Ovary (tissue), 10 donors: ENCODE measurements at regions of chr22 and their contacts with region 1.

Region 1: GRCh38 chr22:38317122-38317994 is at the start of gene CSNK1E:
- DNase-seq: peak; percentile 82 to 89 (median 87)
- H3K4me3 ChIP-seq: peak within 1 kb of the TSS; percentile 59
- H3K27ac ChIP-seq: peak within 1 kb of the TSS; percentile 95 to 97
- H3K4me1 ChIP-seq: peaks cover 10% of the 10 kb centered on the region
- H3K27me3 ChIP-seq: no peaks in the 10 kb centered on the region
- CTCF ChIP-seq: no peak
- EP300 ChIP-seq: no peak
- POLR2A ChIP-seq: peak; percentile 25
- total RNA-seq, gene CSNK1E: 73.2 to 161 (median 105) TPM

Region 2: DNA sequence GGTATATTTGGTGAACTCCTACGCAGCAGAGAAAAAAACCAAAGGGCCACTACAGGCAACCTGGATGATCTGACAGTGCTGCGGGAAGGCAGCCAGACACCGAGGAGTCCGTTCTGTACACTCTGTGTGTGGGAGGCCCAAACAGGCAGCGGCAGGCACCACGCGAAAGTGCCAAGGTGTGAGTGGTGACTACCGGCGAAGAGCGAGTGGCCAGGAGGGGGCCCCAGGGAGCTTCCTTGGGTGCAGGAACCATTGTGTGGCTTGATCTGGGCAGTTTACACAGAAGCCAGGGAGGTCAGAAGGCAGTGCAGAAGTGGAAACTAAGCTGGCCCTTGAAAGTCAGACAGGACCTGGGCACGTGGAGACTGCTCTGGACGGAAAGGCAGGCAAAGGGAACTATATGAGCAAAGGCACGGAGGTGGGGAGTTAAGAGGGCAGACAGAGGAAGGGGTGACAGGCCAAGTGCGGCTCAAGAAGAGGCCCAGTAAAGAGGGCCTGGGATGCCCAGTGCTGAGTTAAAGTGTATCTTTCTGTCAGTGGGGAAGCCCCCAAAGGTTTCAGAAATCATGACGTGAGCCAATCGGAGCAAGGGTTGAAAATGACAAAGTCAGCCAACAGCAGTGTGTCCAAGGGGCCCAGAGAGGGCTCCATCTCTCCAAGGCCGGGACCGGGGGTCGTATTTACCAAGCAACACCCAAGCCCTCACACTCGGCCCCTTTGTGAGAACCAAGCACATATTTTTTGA is 55.1 kb before region 1 on chr22:
- intact Hi-C with region 1: loop called in 1 of 4 experiments (anchors 5 kb)
- DNase-seq: peak in 4 of 5 donors; percentile 46 to 74 (median 56)
- H3K4me3 ChIP-seq: no peak overlapping the region
- H3K27ac ChIP-seq: peak overlapping the region; percentile 32 to 46
- H3K4me1 ChIP-seq: peaks cover 27% of the 10 kb centered on the region
- H3K27me3 ChIP-seq: no peaks in the 10 kb centered on the region
- CTCF ChIP-seq: peak in 1 of 3 donors; percentile 35
- EP300 ChIP-seq: no peak
- POLR2A ChIP-seq: no peak

Region 3: GRCh38 chr22:38272373-38273134 is 44.8 kb before region 1 on chr22 and contains the start of gene TMEM184B:
- intact Hi-C with region 1: loop called in 1 of 4 experiments (anchors 5 kb)
- DNase-seq: peak; percentile 76 to 88 (median 84)
- H3K4me3 ChIP-seq: peak within 1 kb of the TSS; percentile 86
- H3K27ac ChIP-seq: peak within 1 kb of the TSS; percentile 80 to 82
- H3K4me1 ChIP-seq: peaks cover 10% of the 10 kb centered on the region
- H3K27me3 ChIP-seq: no peaks in the 10 kb centered on the region
- CTCF ChIP-seq: peak in 2 of 3 donors; percentile 15 to 18
- EP300 ChIP-seq: no peak
- POLR2A ChIP-seq: peak; percentile 95
- total RNA-seq, gene TMEM184B: 24.9 to 48.3 (median 38.6) TPM

Region 4: DNA sequence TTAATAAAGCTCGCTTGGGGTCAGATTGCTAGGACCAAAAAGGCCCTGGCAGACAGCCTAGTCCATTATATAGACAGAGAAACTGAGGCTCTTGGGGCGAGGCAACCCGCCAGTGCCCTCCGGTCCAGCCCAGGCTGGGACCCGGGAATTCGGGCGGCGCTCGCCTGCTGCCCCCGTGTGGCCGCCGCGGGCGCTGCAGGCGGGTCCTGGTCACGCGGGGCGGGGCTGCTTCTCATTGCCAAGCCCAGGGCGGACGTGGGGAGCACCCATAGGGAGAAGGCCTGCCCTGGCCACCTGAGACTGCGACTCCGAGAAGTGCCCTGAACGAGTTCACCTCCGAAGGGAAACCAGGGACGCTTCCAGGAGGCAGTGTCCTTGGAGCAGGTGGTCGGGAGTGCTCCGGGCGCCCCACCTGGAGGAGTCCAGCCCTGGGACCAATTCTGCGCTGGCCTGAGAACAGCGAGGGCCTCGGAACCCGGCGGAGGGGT is 35.8 kb after region 1 on chr22:
- intact Hi-C with region 1: no loop called
- DNase-seq: peak; percentile 54 to 86 (median 70)
- H3K4me3 ChIP-seq: no peak overlapping the region
- H3K27ac ChIP-seq: no peak overlapping the region
- H3K4me1 ChIP-seq: no peaks in the 10 kb centered on the region
- H3K27me3 ChIP-seq: no peaks in the 10 kb centered on the region
- CTCF ChIP-seq: peak; percentile 95 to 99 (median 96)
- EP300 ChIP-seq: no peak
- POLR2A ChIP-seq: no peak

Region 5: DNA sequence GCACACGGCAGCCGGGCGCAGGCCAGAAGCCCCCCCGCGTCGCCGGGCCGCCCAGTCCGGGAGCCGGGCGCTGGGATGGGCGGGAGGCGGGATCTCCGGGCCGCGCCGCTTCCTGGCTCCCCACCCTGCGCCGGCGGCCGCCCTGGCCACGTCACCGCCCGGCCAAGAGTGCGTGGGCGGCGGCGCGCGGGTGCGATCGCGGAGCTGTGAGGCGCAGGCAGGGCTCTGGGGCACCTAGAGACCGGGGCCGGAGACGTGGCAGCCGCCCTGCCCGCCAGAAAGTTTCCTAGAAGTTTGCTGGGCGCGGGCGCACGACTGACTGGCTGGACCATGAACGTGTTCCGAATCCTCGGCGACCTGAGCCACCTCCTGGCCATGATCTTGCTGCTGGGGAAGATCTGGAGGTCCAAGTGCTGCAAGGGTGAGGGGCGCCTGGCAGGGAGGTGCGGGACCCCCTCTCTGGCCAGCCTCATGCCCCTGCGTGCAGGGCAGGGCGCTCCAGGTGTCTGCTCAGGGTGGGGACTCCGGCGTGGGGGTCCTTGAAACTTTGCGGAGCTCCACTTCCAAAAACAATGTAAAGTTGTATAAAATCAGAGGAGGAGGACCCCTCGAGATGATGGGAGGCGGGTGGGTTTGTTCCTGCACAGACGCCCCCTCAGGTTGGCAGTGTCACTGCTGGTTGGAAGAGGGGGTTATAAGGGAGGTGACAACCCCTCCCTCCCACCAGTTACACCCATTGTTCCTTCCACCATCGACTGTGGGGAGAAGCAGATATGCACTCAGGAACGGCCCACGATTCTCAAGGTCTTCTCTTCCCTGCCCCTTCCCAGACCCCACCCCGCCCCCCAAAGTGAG is 150.8 kb after region 1 on chr22 and contains the start of gene KDELR3:
- intact Hi-C with region 1: no loop called
- DNase-seq: peak; percentile 64 to 83 (median 72)
- H3K4me3 ChIP-seq: peak within 1 kb of the TSS; percentile 47
- H3K27ac ChIP-seq: no peak within 1 kb of the TSS
- H3K4me1 ChIP-seq: peaks cover 5% of the 10 kb centered on the region
- H3K27me3 ChIP-seq: no peaks in the 10 kb centered on the region
- CTCF ChIP-seq: no peak
- EP300 ChIP-seq: no peak
- POLR2A ChIP-seq: no peak
- total RNA-seq, gene KDELR3: 0.81 to 8.3 (median 2.3) TPM

Region 6: GRCh38 chr22:38506118-38506962 is 189.0 kb after region 1 on chr22 and contains the start of gene DDX17:
- intact Hi-C with region 1: loop called in 1 of 4 experiments (anchors 10 kb)
- DNase-seq: peak; percentile 91 to 96 (median 94)
- H3K4me3 ChIP-seq: peak within 1 kb of the TSS; percentile 67
- H3K27ac ChIP-seq: peak within 1 kb of the TSS; percentile 99 to 100
- H3K4me1 ChIP-seq: peaks cover 3% of the 10 kb centered on the region
- H3K27me3 ChIP-seq: no peaks in the 10 kb centered on the region
- CTCF ChIP-seq: peak in 2 of 3 donors; percentile 30 to 47
- EP300 ChIP-seq: peak; percentile 24
- POLR2A ChIP-seq: peak; percentile 85
- total RNA-seq, gene DDX17: 435 to 602 (median 515) TPM

Region 7: DNA sequence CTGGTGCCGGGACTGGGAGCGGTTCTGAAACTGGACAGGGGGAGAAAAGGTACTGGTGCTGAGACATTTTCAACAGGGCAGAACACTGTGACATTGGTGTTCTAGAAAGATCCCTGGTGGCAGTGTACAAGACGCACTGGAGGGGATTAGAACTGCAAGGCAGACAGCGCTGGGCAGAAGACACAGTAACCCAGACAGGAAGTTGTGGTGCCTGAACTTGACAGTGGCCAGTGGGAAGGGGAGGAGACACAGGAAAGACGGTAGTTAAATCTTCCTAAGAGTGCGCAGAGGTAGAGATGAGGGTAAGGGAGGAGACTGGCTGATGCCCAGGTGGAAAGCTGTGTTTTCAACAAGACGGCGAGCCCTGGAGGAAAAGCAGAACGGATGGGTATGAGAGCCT is 314.4 kb after region 1 on chr22:
- intact Hi-C with region 1: no loop called
- DNase-seq: no peak
- H3K4me3 ChIP-seq: no peak overlapping the region
- H3K27ac ChIP-seq: no peak overlapping the region
- H3K4me1 ChIP-seq: no peaks in the 10 kb centered on the region
- H3K27me3 ChIP-seq: no peaks in the 10 kb centered on the region
- CTCF ChIP-seq: no peak
- EP300 ChIP-seq: no peak
- POLR2A ChIP-seq: no peak